Naive thymus-derived CD4-positive, alpha-beta T cell (primary cell): ENCODE measurements at regions of chr3 and their contacts with region 1.

Region 1: DNA sequence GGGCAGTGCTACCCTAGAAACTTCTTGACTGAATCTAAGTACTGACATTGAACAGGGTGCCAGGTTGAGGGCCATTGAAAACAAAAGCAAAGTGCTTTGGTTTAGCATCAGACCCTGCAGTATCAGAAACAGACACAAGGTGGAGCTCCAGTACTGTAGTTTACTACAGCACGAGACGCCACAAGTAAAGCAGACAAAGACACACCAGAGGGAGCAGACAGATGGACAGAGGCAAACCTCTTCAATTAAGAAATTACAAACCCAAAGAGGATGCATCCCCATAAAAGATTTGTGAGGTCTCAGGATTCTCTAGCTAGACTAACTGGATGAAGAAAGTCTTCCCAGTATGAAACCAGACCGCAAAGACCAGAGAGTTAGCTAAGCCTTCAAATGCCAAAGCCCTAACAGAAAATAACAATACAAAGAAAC is 16.6 kb downstream of the TOP2B start:
- DNase-seq: peak; percentile 50 to 84 (median 76)
- ATAC-seq: peak; percentile 99
- H3K4me3 ChIP-seq: no peak overlapping the region
- H3K4me3 Mint-ChIP-seq: peak overlapping the region in 4 of 10 donors; percentile 2 to 16 (median 14)
- H3K27ac ChIP-seq: no peak overlapping the region
- H3K27ac Mint-ChIP-seq: peak overlapping the region in 8 of 9 donors; percentile 2 to 53 (median 12)
- H3K4me1 ChIP-seq: peaks cover 0 to 10% of the 10 kb centered on the region in 2 donors
- H3K4me1 Mint-ChIP-seq: peaks cover 22 to 59% (median 54%) of the 10 kb centered on the region in 7 donors
- H3K27me3 ChIP-seq: no peaks in the 10 kb centered on the region
- H3K27me3 Mint-ChIP-seq: no peaks in the 10 kb centered on the region

Region 2: GRCh38 chr3:25664810-25665314 is 16.7 kb after region 1 on chr3 and contains the start of gene TOP2B:
- CTCF ChIA-PET with region 1: interaction called, 5 read pairs
- POLR2A ChIA-PET with region 1: interaction called, 5 read pairs
- intact Hi-C with region 1: loop called (anchors 1 kb)
- DNase-seq: peak; percentile 87 to 96 (median 95)
- ATAC-seq: peak; percentile 96
- H3K4me3 ChIP-seq: peak within 1 kb of the TSS; percentile 63
- H3K4me3 Mint-ChIP-seq: peak within 1 kb of the TSS; percentile 89 to 100 (median 99)
- H3K27ac ChIP-seq: peak within 1 kb of the TSS; percentile 95
- H3K27ac Mint-ChIP-seq: peak within 1 kb of the TSS; percentile 97 to 100 (median 99)
- H3K4me1 ChIP-seq: peaks cover 11 to 34% of the 10 kb centered on the region in 2 donors
- H3K4me1 Mint-ChIP-seq: peaks cover 20 to 57% (median 50%) of the 10 kb centered on the region in 7 donors
- H3K27me3 ChIP-seq: no peaks in the 10 kb centered on the region
- H3K27me3 Mint-ChIP-seq: peaks cover 0 to 4% (median 0%) of the 10 kb centered on the region in 5 donors
- total RNA-seq, gene TOP2B: 109 to 190 (median 127) TPM

Region 3: DNA sequence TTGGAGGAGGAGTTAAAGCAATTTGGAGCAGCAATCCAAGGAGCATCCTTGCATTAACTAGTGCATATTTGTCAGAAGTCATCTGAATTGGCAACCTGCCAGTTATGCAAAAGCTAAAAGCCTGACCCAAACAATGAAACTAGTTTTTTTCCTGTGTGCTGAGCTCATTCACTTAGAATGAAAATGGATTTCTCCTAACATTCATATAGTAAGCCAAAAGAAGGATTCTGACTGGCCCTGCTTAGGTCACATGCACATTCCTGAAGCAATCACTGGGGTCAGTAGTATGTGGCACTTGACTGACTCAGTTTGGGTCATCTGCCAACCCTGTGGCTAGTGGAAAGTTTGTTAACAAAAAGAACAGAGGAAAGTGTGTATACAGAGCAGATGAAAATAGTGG is 172.2 kb after region 1 on chr3:
- CTCF ChIA-PET with region 1: no interaction called
- POLR2A ChIA-PET with region 1: no interaction called
- intact Hi-C with region 1: no loop called
- DNase-seq: no peak
- ATAC-seq: peak; percentile 12
- H3K4me3 ChIP-seq: no peak overlapping the region
- H3K4me3 Mint-ChIP-seq: no peak overlapping the region
- H3K27ac ChIP-seq: no peak overlapping the region
- H3K27ac Mint-ChIP-seq: no peak overlapping the region
- H3K4me1 ChIP-seq: no peaks in the 10 kb centered on the region
- H3K4me1 Mint-ChIP-seq: peaks cover 0 to 7% (median 0%) of the 10 kb centered on the region in 7 donors
- H3K27me3 ChIP-seq: no peaks in the 10 kb centered on the region
- H3K27me3 Mint-ChIP-seq: peaks cover 0 to 6% (median 0%) of the 10 kb centered on the region in 5 donors

Region 4: GRCh38 chr3:25856902-25857518 is 208.9 kb after region 1 on chr3:
- CTCF ChIA-PET with region 1: interaction called, 84 read pairs
- POLR2A ChIA-PET with region 1: interaction called, 3 read pairs
- intact Hi-C with region 1: loop called (anchors 1 kb)
- DNase-seq: peak in 7 of 9 donors; percentile 10 to 56 (median 37)
- ATAC-seq: peak; percentile 87
- H3K4me3 ChIP-seq: no peak overlapping the region
- H3K4me3 Mint-ChIP-seq: no peak overlapping the region
- H3K27ac ChIP-seq: no peak overlapping the region
- H3K27ac Mint-ChIP-seq: no peak overlapping the region
- H3K4me1 ChIP-seq: no peaks in the 10 kb centered on the region
- H3K4me1 Mint-ChIP-seq: peaks cover 0 to 3% (median 0%) of the 10 kb centered on the region in 7 donors
- H3K27me3 ChIP-seq: no peaks in the 10 kb centered on the region
- H3K27me3 Mint-ChIP-seq: no peaks in the 10 kb centered on the region

Region 5: DNA sequence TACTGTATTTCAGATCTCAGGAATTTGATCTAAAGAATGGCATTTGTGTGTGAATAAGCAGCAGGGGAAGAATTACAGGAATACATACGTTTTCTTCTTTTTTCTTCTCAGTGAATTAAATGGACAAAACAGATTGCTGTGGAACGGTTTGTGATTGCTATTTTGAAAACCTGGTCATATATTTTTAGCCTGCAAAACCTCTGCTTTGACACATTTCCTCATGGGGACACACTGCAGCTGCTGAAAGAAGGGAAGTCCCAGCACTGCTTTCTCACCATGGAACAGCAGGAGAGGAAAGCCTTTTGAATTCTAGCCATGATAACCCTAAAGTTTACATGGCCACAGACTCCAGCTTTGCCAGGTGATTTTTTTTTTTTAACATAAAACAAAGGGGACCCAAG is 456.7 kb after region 1 on chr3:
- CTCF ChIA-PET with region 1: no interaction called
- POLR2A ChIA-PET with region 1: no interaction called
- intact Hi-C with region 1: loop called in 1 of 2 experiments (anchors 10 kb)
- DNase-seq: no peak
- ATAC-seq: no peak
- H3K4me3 ChIP-seq: no peak overlapping the region
- H3K4me3 Mint-ChIP-seq: no peak overlapping the region
- H3K27ac ChIP-seq: no peak overlapping the region
- H3K27ac Mint-ChIP-seq: no peak overlapping the region
- H3K4me1 ChIP-seq: no peaks in the 10 kb centered on the region
- H3K4me1 Mint-ChIP-seq: no peaks in the 10 kb centered on the region
- H3K27me3 ChIP-seq: no peaks in the 10 kb centered on the region
- H3K27me3 Mint-ChIP-seq: peaks cover 0 to 5% (median 0%) of the 10 kb centered on the region in 5 donors